ENCODE measurements at regions of chr4 and their contacts with region 1.

Region 1: DNA sequence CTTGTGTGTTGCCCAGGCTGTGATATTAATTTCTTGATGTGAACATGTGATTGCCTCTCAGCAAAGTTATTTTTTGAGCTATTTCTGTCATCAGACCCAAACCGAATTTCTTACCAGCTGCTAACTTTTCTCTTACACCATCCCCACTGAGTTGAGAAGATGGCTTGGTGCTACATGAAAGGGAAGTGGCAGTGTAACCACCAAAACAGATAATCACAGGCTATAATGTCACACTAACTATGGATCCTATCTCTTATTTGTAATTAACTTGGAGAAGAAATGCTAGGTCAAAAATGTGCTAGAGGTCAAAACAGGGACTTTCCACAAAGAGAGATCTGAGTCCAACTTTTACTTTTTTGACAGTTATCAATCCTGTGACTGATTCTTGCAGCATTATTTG is 43.8 kb downstream of the ELOVL6 start:
- DNase-seq: no peak
- ATAC-seq: no peak
- H3K4me3 ChIP-seq: no peak overlapping the region
- H3K27ac ChIP-seq: no peak overlapping the region
- H3K4me1 ChIP-seq: peaks cover 0 to 5% of the 10 kb centered on the region in 2 experiments; a peak in 1 of 5 replicates
- H3K27me3 ChIP-seq: no peaks in the 10 kb centered on the region
- CTCF ChIP-seq: no peak
- EP300 ChIP-seq: no peak
- POLR2A ChIP-seq: no peak
- RAD21 ChIP-seq: no peak

Region 2: GRCh38 chr4:110165382-110166285 is 11.1 kb after region 1 on chr4:
- CTCF ChIA-PET with region 1: no interaction called
- POLR2A ChIA-PET with region 1: interaction called, 11 read pairs
- in situ Hi-C with region 1: no loop called
- intact Hi-C with region 1: no loop called
- DNase-seq: peak in 3 of 4 experiments; percentile 24 to 45 (median 29)
- ATAC-seq: peak; percentile 69
- H3K4me3 ChIP-seq: no peak overlapping the region
- H3K27ac ChIP-seq: peak overlapping the region; percentile 47; the same call in 2 of the 3 replicates
- H3K4me1 ChIP-seq: peaks cover 6 to 25% of the 10 kb centered on the region in 2 experiments; a peak in 4 of 5 replicates
- H3K27me3 ChIP-seq: no peaks in the 10 kb centered on the region
- CTCF ChIP-seq: no peak
- EP300 ChIP-seq: no peak
- POLR2A ChIP-seq: peak; percentile 24; the same call in 1 of the 2 replicates
- RAD21 ChIP-seq: no peak

Region 3: GRCh38 chr4:110250023-110250387 is 95.4 kb after region 1 on chr4:
- CTCF ChIA-PET with region 1: no interaction called
- POLR2A ChIA-PET with region 1: no interaction called
- in situ Hi-C with region 1: no loop called
- intact Hi-C with region 1: no loop called
- DNase-seq: no peak
- ATAC-seq: no peak
- H3K4me3 ChIP-seq: no peak overlapping the region
- H3K27ac ChIP-seq: no peak overlapping the region
- H3K4me1 ChIP-seq: peaks cover 20 to 33% of the 10 kb centered on the region in 2 experiments
- H3K27me3 ChIP-seq: no peaks in the 10 kb centered on the region
- CTCF ChIP-seq: no peak
- EP300 ChIP-seq: no peak
- POLR2A ChIP-seq: no peak
- RAD21 ChIP-seq: no peak

Region 4: DNA sequence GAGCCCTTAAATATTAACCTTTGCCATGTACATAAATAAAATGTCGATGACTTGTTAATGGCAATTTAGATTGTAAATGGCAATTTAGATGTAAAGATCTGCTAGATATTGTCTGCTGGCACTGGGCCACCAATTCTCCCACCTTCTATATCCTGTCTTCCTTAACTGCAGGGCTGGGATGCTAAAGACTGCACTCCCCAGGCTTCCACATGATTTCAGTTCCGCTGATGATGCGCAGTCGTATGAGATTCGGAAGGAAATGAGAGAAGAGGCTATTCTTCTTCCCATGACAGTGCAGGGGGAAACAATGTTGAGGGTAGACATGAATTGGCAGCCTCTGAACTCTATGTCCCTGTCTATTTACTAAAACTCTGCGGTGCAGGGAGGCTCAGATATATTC is 412.6 kb after region 1 on chr4:
- CTCF ChIA-PET with region 1: no interaction called
- POLR2A ChIA-PET with region 1: no interaction called
- in situ Hi-C with region 1: no loop called
- intact Hi-C with region 1: no loop called
- DNase-seq: no peak
- ATAC-seq: no peak
- H3K4me3 ChIP-seq: no peak overlapping the region
- H3K27ac ChIP-seq: no peak overlapping the region
- H3K4me1 ChIP-seq: no peaks in the 10 kb centered on the region
- H3K27me3 ChIP-seq: no peaks in the 10 kb centered on the region
- CTCF ChIP-seq: no peak
- EP300 ChIP-seq: no peak
- POLR2A ChIP-seq: no peak
- RAD21 ChIP-seq: no peak